ENCODE measurements at regions of chr12 and their contacts with region 1.

Region 1: GRCh38 chr12:93825931-93826555 is 148.9 kb downstream of the CRADD start:
- DNase-seq: no peak
- ATAC-seq: peak in 1 of 4 donors; percentile 48
- H3K4me3 ChIP-seq: peak overlapping the region in 1 of 12 donors; percentile 5
- H3K27ac ChIP-seq: peak overlapping the region; percentile 17 to 73 (median 62)
- H3K4me1 ChIP-seq: peaks cover 0 to 72% (median 52%) of the 10 kb centered on the region in 12 donors
- H3K27me3 ChIP-seq: no peaks in the 10 kb centered on the region
- CTCF ChIP-seq: no peak
- POLR2A ChIP-seq: no peak

Region 2: DNA sequence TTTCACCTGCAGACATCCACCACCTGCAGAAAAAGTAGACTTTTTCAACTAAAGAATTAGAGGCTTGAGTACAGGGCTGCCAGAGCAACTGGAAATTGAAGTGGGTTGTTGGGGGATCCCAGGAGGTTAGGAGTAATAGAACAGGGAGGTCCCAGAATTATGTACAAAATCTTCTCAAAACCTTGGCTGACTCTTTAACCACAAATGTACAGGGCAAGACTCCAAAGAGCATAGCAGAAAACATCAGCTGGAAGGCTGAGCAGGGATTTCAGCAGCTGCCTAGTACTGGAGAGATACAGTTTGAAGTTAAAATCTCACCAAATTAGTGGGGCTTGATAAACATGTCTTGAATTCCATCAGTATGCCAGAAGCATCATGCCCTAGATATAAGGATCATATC is 42.7 kb after region 1 on chr12:
- intact Hi-C with region 1: loop called in 1 of 10 experiments (anchors 5 kb)
- DNase-seq: peak in 1 of 5 donors; percentile 37
- ATAC-seq: peak; percentile 77 to 89 (median 88)
- H3K4me3 ChIP-seq: no peak overlapping the region
- H3K27ac ChIP-seq: peak overlapping the region in 4 of 12 donors; percentile 1 to 41 (median 26)
- H3K4me1 ChIP-seq: peaks cover 0 to 13% (median 0%) of the 10 kb centered on the region in 12 donors
- H3K27me3 ChIP-seq: no peaks in the 10 kb centered on the region
- CTCF ChIP-seq: no peak
- POLR2A ChIP-seq: no peak

Region 3: GRCh38 chr12:93886533-93887511 is 60.8 kb after region 1 on chr12:
- intact Hi-C with region 1: loop called in 4 of 10 experiments (anchors 5 to 10 kb)
- DNase-seq: no peak
- ATAC-seq: no peak
- H3K4me3 ChIP-seq: no peak overlapping the region
- H3K27ac ChIP-seq: no peak overlapping the region
- H3K4me1 ChIP-seq: peaks cover 0 to 4% (median 0%) of the 10 kb centered on the region in 12 donors
- H3K27me3 ChIP-seq: no peaks in the 10 kb centered on the region
- CTCF ChIP-seq: no peak
- POLR2A ChIP-seq: no peak

Region 4: GRCh38 chr12:94101738-94102660 is 276.0 kb after region 1 on chr12:
- intact Hi-C with region 1: no loop called
- DNase-seq: peak; percentile 83 to 91 (median 85)
- ATAC-seq: peak; percentile 80 to 91 (median 88)
- H3K4me3 ChIP-seq: peak overlapping the region; percentile 41 to 81 (median 70)
- H3K27ac ChIP-seq: peak overlapping the region in 11 of 12 donors; percentile 48 to 82 (median 61)
- H3K4me1 ChIP-seq: peaks cover 0 to 17% (median 10%) of the 10 kb centered on the region in 12 donors
- H3K27me3 ChIP-seq: peaks cover 0 to 4% (median 0%) of the 10 kb centered on the region in 9 donors
- CTCF ChIP-seq: peak; percentile 76 to 90 (median 80)
- POLR2A ChIP-seq: no peak